Activated CD4-positive, alpha-beta memory T cell treated with anti-CD3 and anti-CD28 coated beads for 36 hours (primary cell): ENCODE measurements at regions of chr4 and their contacts with region 1.

Region 1: DNA sequence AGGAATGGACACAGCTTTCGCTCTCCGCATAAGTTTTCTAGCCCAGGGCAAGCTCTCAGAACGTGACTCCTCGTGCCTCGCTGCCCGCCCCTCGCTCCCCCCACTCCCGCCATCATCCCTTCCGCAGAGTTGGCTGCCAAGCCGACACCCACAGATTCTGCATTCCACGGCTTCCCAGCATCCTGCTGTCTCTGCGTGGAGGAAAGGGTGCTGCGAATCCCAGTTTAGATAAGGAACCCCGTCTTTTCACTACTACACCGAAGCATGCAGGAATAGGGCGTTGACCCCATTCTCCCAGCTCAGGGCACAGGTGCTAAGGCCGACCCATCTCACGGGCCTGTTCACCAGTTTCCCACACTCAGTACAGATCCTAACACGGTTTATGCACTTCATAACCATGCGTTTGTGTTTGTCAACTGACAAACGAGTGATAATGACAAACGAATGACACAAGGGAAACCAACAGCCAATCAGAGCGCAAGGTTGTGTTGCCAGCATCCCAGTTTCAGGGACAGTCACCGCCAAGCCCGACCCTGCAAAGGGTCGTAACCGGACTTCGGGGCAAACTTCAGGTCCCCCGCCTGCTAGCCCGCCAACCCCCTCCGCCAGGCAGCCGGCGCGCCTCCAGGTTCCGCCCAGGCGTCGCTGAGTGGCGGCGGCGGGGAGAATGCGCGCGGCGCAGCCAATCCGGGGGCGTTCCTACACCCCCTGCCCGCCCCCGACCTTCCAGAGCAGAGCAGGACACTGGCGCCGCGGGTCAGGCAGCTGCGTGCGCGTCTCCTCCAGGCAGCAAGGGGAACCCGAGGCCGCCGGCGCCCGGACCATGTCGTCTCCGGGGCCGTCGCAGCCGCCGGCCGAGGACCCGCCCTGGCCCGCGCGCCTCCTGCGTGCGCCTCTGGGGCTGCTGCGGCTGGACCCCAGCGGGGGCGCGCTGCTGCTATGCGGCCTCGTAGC is at the start of gene CYP2U1:
- DNase-seq: peak; percentile 80
- H3K4me3 Mint-ChIP-seq: peak within 1 kb of the TSS; percentile 81
- H3K27ac Mint-ChIP-seq: peak within 1 kb of the TSS; percentile 25
- H3K4me1 Mint-ChIP-seq: peaks cover 14% of the 10 kb centered on the region
- H3K27me3 Mint-ChIP-seq: no peaks in the 10 kb centered on the region
- total RNA-seq, gene CYP2U1: 1.2 to 1.5 TPM

Region 2: DNA sequence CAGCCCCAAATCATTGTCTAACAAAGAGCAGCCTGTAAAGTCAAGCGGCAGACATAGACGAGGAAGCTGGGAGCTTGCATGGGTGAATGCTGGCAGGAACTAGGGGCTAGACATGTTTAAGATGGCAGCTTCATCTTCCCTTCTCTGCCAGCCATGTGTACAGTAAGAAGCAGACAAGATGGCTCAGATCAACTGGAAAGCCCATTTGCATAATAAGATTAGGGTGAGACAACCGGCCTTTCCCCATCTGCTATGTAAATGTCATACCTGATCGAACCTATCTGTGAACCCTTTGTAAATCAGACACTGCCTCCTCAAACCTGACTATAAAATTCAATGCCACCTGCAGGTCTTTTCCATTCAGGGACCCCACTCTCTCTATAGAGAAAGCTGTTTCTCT is 35.8 kb after region 1 on chr4:
- CTCF ChIA-PET with region 1: no interaction called
- POLR2A ChIA-PET with region 1: no interaction called
- intact Hi-C with region 1: no loop called
- DNase-seq: no peak
- H3K4me3 Mint-ChIP-seq: no peak overlapping the region
- H3K27ac Mint-ChIP-seq: no peak overlapping the region
- H3K4me1 Mint-ChIP-seq: no peaks in the 10 kb centered on the region
- H3K27me3 Mint-ChIP-seq: no peaks in the 10 kb centered on the region

Region 3: GRCh38 chr4:107989537-107990386 is 58.7 kb after region 1 on chr4 and contains the start of gene HADH:
- CTCF ChIA-PET with region 1: no interaction called
- POLR2A ChIA-PET with region 1: no interaction called
- intact Hi-C with region 1: loop called (anchors 1 kb)
- DNase-seq: peak; percentile 95
- H3K4me3 Mint-ChIP-seq: peak within 1 kb of the TSS; percentile 85
- H3K27ac Mint-ChIP-seq: peak within 1 kb of the TSS; percentile 76
- H3K4me1 Mint-ChIP-seq: peaks cover 36% of the 10 kb centered on the region
- H3K27me3 Mint-ChIP-seq: no peaks in the 10 kb centered on the region
- total RNA-seq, gene HADH: 49.0 to 50.6 TPM

Region 4: DNA sequence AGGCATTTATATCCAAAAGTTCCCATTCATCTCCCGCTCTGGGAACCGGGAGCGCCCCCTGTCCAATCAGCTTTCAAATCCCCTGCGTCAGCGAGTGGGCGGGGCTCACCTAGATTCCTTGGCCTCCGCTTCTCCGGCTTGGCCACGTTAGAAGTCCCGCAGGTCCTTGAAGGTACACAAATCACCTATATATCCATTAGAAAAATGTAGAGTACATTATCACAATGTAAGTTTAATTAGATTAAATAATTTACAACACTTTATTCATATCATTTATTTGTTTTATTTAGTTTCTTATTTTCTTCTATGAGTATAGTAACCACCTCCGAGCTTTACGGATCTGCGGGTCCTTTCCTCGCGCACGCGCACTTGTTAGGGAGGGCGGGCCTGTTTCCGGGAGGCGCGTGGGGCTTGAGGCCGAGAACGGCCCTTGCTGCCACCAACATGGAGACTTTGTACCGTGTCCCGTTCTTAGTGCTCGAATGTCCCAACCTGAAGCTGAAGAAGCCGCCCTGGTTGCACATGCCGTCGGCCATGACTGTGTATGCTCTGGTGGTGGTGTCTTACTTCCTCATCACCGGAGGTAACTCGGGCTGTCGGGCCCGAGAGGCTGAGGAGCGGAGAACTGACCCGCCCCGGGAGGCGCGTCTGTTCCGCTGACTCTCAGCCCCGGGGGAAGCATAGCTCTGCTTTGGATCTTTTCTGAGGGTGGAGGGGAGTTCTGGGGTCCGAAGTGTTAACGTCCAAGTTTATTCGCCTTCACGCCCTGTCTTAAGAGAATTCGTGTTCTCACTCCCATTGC is 719.3 kb after region 1 on chr4 and contains the start of gene OSTC:
- CTCF ChIA-PET with region 1: no interaction called
- POLR2A ChIA-PET with region 1: no interaction called
- intact Hi-C with region 1: loop called (anchors 1 kb)
- DNase-seq: peak; percentile 94
- H3K4me3 Mint-ChIP-seq: peak within 1 kb of the TSS; percentile 96
- H3K27ac Mint-ChIP-seq: peak within 1 kb of the TSS; percentile 91
- H3K4me1 Mint-ChIP-seq: peaks cover 34% of the 10 kb centered on the region
- H3K27me3 Mint-ChIP-seq: no peaks in the 10 kb centered on the region
- total RNA-seq, gene OSTC: 74.3 to 76.6 TPM